Heart left ventricle (tissue), 16 donors: ENCODE measurements at regions of chr11 and their contacts with region 1.

Region 1: DNA sequence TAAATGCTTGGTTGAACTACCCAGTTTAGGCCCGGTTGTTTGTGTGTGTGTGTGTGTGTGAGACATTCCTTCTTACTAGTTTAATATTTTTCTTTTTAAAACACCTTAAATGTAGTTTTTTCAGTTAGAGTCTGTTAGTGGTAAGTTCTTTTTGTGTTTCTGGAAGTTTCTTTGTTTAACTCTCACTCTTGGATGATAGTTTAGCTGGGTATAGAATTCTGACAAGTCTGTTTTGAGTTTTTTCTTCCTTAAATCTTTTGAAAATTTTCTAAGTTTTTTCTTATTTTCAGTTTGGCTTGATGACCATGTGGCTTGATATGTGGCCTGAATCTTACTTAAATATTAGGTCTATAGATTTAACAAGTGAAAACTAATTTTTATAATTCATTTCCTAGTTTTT is 60.1 kb downstream of the PDE3B start:
- DNase-seq: no peak
- ATAC-seq: no peak
- H3K4me3 ChIP-seq: no peak overlapping the region
- H3K27ac ChIP-seq: no peak overlapping the region
- H3K4me1 ChIP-seq: peaks cover 0 to 21% (median 0%) of the 10 kb centered on the region in 12 donors
- H3K27me3 ChIP-seq: no peaks in the 10 kb centered on the region
- CTCF ChIP-seq: no peak
- POLR2A ChIP-seq: no peak

Region 2: GRCh38 chr11:14555818-14556217 is 147.9 kb before region 1 on chr11:
- intact Hi-C with region 1: no loop called
- DNase-seq: no peak
- ATAC-seq: no peak
- H3K4me3 ChIP-seq: no peak overlapping the region
- H3K27ac ChIP-seq: peak overlapping the region in 5 of 12 donors; percentile 15 to 75 (median 51)
- H3K4me1 ChIP-seq: peaks cover 0 to 26% (median 7%) of the 10 kb centered on the region in 12 donors
- H3K27me3 ChIP-seq: no peaks in the 10 kb centered on the region
- CTCF ChIP-seq: no peak
- POLR2A ChIP-seq: no peak

Region 3: DNA sequence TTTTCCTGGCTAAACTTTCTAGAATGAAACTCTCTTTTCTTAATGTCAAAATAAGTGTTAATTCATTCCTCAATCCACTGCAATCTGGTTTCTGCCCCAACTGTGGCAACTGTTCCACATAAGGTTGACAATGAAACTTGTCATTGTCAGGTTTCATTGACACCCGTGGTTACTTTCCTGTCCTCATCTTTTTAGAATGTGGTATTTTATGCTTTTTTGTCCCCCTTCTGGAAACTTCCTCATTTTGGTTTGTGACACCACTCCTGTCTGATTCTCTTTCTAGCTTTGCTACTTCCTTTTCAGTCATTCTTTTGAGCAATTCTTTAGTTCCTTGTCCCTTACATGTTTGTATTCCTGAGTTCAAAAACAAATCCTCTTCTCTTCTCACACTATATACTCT is 67.6 kb before region 1 on chr11:
- intact Hi-C with region 1: no loop called
- DNase-seq: no peak
- ATAC-seq: peak in 1 of 4 donors; percentile 26
- H3K4me3 ChIP-seq: no peak overlapping the region
- H3K27ac ChIP-seq: peak overlapping the region in 2 of 12 donors; percentile 27 to 67
- H3K4me1 ChIP-seq: peaks cover 0 to 21% (median 0%) of the 10 kb centered on the region in 12 donors
- H3K27me3 ChIP-seq: no peaks in the 10 kb centered on the region
- CTCF ChIP-seq: no peak
- POLR2A ChIP-seq: no peak

Region 4: GRCh38 chr11:14751975-14752407 is 48.3 kb after region 1 on chr11:
- intact Hi-C with region 1: loop called in 1 of 10 experiments (anchors 10 kb)
- DNase-seq: no peak
- ATAC-seq: no peak
- H3K4me3 ChIP-seq: no peak overlapping the region
- H3K27ac ChIP-seq: no peak overlapping the region
- H3K4me1 ChIP-seq: peaks cover 0 to 5% (median 0%) of the 10 kb centered on the region in 12 donors
- H3K27me3 ChIP-seq: no peaks in the 10 kb centered on the region
- CTCF ChIP-seq: no peak
- POLR2A ChIP-seq: no peak